ENCODE measurements at regions of chr11 and their contacts with region 1.

Region 1: DNA sequence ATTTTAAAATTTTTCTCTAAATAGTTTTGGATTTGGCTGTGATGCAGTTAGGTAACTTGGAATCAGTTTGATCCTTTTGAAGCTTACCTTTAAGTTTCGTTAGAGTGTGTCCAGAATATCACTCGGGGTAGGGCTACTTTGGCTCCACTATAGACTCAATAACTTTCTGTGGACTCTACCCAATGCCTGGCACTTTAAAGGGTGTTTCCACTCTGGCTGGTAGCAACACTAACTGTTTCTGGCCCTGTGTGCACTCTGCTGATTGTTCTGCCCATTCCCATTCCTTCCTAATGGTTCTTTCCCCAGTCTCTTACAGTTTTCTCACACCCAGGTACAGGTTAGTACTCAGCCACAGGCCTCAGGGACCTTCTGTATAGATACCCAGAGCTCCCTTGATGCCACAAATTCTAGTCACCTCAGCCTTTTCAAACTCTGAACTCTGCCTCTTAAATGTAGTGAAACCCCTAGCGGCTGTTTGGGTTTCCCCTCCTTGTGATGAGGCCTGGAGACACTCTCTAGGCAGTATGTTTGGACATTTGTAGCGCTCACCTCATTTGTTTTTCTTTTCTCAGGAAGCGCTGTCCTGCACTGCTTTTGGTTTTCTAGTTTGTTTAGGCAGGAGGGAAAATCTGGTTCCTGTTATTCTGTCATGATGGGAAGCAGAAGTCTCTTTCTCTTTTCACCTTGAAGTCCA is 16.8 kb downstream of the CUL5 start:
- DNase-seq: peak; percentile 52
- ATAC-seq: peak; percentile 85
- H3K4me3 ChIP-seq: no peak overlapping the region
- H3K27ac ChIP-seq: no peak overlapping the region; the same call in 1 of the 2 replicates
- H3K4me1 ChIP-seq: peaks cover 6% of the 10 kb centered on the region
- H3K27me3 ChIP-seq: no peaks in the 10 kb centered on the region
- CTCF ChIP-seq: 0 out of 2 replicates have a peak, but pooled peaks have one; percentile 19
- POLR2A ChIP-seq: no peak
- RAD21 ChIP-seq: no peak

Region 2: DNA sequence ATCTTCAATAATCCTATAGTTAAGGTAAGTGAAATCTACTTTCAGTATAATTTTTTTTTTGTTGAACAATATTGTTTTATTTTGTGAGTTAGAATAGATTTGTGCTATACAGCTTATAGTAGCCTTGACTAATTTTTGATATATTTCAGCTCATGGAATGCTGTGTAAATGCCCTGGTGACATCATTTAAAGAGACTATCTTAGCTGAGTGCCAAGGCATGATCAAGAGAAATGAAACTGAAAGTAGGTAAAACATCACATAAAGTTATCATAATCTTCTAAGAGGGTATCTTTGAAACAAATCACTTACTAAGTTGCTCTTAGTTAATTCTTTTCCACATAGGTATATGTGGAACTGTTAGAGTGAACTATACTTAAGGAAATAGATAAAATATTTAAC is 44.4 kb after region 1 on chr11:
- CTCF ChIA-PET with region 1: no interaction called
- POLR2A ChIA-PET with region 1: no interaction called
- dilution Hi-C with region 1: no loop called
- in situ Hi-C with region 1: no loop called
- intact Hi-C with region 1: no loop called
- DNase-seq: peak; percentile 75
- ATAC-seq: peak; percentile 89
- H3K4me3 ChIP-seq: no peak overlapping the region
- H3K27ac ChIP-seq: no peak overlapping the region
- H3K4me1 ChIP-seq: no peaks in the 10 kb centered on the region
- H3K27me3 ChIP-seq: no peaks in the 10 kb centered on the region
- CTCF ChIP-seq: no peak
- POLR2A ChIP-seq: no peak
- RAD21 ChIP-seq: no peak

Region 3: GRCh38 chr11:108084811-108085210 is 59.3 kb after region 1 on chr11:
- CTCF ChIA-PET with region 1: no interaction called
- POLR2A ChIA-PET with region 1: no interaction called
- dilution Hi-C with region 1: no loop called
- in situ Hi-C with region 1: loop called (anchors 10 kb)
- intact Hi-C with region 1: no loop called
- DNase-seq: no peak
- ATAC-seq: no peak
- H3K4me3 ChIP-seq: no peak overlapping the region
- H3K27ac ChIP-seq: no peak overlapping the region
- H3K4me1 ChIP-seq: no peaks in the 10 kb centered on the region
- H3K27me3 ChIP-seq: no peaks in the 10 kb centered on the region
- CTCF ChIP-seq: no peak
- POLR2A ChIP-seq: no peak
- RAD21 ChIP-seq: no peak

Region 4: GRCh38 chr11:108319541-108320145 is 294.1 kb after region 1 on chr11:
- CTCF ChIA-PET with region 1: no interaction called
- POLR2A ChIA-PET with region 1: no interaction called
- dilution Hi-C with region 1: no loop called
- in situ Hi-C with region 1: no loop called
- intact Hi-C with region 1: loop called (anchors 10 kb)
- DNase-seq: peak; percentile 56
- ATAC-seq: peak; percentile 82
- H3K4me3 ChIP-seq: no peak overlapping the region
- H3K27ac ChIP-seq: peak overlapping the region; percentile 54; the same call in 1 of the 2 replicates
- H3K4me1 ChIP-seq: peaks cover 8% of the 10 kb centered on the region
- H3K27me3 ChIP-seq: no peaks in the 10 kb centered on the region
- CTCF ChIP-seq: no peak
- POLR2A ChIP-seq: no peak
- RAD21 ChIP-seq: no peak